GM12878 (cell line): ENCODE measurements at regions of chr6 and their contacts with region 1.

Region 1: GRCh38 chr6:28399350-28400121 is at the start of gene ZSCAN12:
- DNase-seq: peak; percentile 61
- ATAC-seq: peak; percentile 86
- H3K4me3 ChIP-seq: peak within 1 kb of the TSS; percentile 80
- H3K27ac ChIP-seq: peak within 1 kb of the TSS; percentile 97
- H3K4me1 ChIP-seq: peaks cover 4% of the 10 kb centered on the region
- H3K27me3 ChIP-seq: no peaks in the 10 kb centered on the region
- CTCF ChIP-seq: peak; percentile 50 to 59 (median 54)
- EP300 ChIP-seq: peak in 1 of 2 experiments; percentile 39; a peak in 1 of 4 replicates
- POLR2A ChIP-seq: peak; percentile 87
- RAD21 ChIP-seq: peak; percentile 25; the same call in 1 of the 2 replicates
- polyA plus RNA-seq, gene ZSCAN12: 1.2 to 1.6 TPM

Region 2: GRCh38 chr6:28383235-28384142 is 16.0 kb before region 1 on chr6:
- CTCF ChIA-PET with region 1: interaction called, 59 read pairs
- POLR2A ChIA-PET with region 1: interaction called, 7 read pairs
- RAD21 ChIA-PET with region 1: interaction called, 5 read pairs
- SMC1A ChIA-PET with region 1: interaction called, 30 read pairs
- in situ Hi-C with region 1: no loop called
- intact Hi-C with region 1: loop called (anchors 2 kb)
- DNase-seq: no peak
- ATAC-seq: peak; percentile 97
- H3K4me3 ChIP-seq: peak overlapping the region; percentile 38; the same call in 1 of the 2 replicates
- H3K27ac ChIP-seq: peak overlapping the region; percentile 50; the same call in 1 of the 2 replicates
- H3K4me1 ChIP-seq: no peaks in the 10 kb centered on the region
- H3K27me3 ChIP-seq: no peaks in the 10 kb centered on the region
- CTCF ChIP-seq: peak; percentile 41 to 47 (median 42); a peak in 5 of 6 replicates
- EP300 ChIP-seq: peak; percentile 72 to 74; a peak in 2 of 4 replicates
- POLR2A ChIP-seq: peak; percentile 66
- RAD21 ChIP-seq: peak; percentile 49

Region 3: GRCh38 chr6:28443112-28443773 is 43.7 kb after region 1 on chr6 and contains the start of gene ZSCAN23:
- CTCF ChIA-PET with region 1: no interaction called
- POLR2A ChIA-PET with region 1: no interaction called
- RAD21 ChIA-PET with region 1: no interaction called
- SMC1A ChIA-PET with region 1: no interaction called
- in situ Hi-C with region 1: no loop called
- intact Hi-C with region 1: loop called (anchors 1 kb)
- DNase-seq: peak; percentile 34
- ATAC-seq: peak; percentile 98
- H3K4me3 ChIP-seq: peak within 1 kb of the TSS; percentile 78
- H3K27ac ChIP-seq: no peak within 1 kb of the TSS; the same call in 1 of the 2 replicates
- H3K4me1 ChIP-seq: no peaks in the 10 kb centered on the region
- H3K27me3 ChIP-seq: peaks cover 0 to 2% of the 10 kb centered on the region in 2 experiments; a peak in 1 of 4 replicates
- CTCF ChIP-seq: no peak
- EP300 ChIP-seq: no peak
- POLR2A ChIP-seq: peak; percentile 80
- RAD21 ChIP-seq: no peak
- polyA plus RNA-seq, gene ZSCAN23: 0.04 to 0.34 TPM

Region 4: GRCh38 chr6:28489366-28490204 is 90.0 kb after region 1 on chr6:
- CTCF ChIA-PET with region 1: no interaction called
- POLR2A ChIA-PET with region 1: no interaction called
- RAD21 ChIA-PET with region 1: no interaction called
- SMC1A ChIA-PET with region 1: no interaction called
- in situ Hi-C with region 1: no loop called
- intact Hi-C with region 1: loop called (anchors 5 kb)
- DNase-seq: peak; percentile 36
- ATAC-seq: peak; percentile 87
- H3K4me3 ChIP-seq: peak overlapping the region; percentile 67
- H3K27ac ChIP-seq: no peak overlapping the region
- H3K4me1 ChIP-seq: no peaks in the 10 kb centered on the region
- H3K27me3 ChIP-seq: no peaks in the 10 kb centered on the region
- CTCF ChIP-seq: no peak
- EP300 ChIP-seq: no peak
- POLR2A ChIP-seq: peak; percentile 32; the same call in 1 of the 2 replicates
- RAD21 ChIP-seq: no peak

Region 5: GRCh38 chr6:28542440-28543296 is 143.1 kb after region 1 on chr6:
- CTCF ChIA-PET with region 1: interaction called, 6 read pairs
- POLR2A ChIA-PET with region 1: no interaction called
- RAD21 ChIA-PET with region 1: no interaction called
- SMC1A ChIA-PET with region 1: interaction called, 3 read pairs
- in situ Hi-C with region 1: no loop called
- intact Hi-C with region 1: loop called (anchors 2 kb)
- DNase-seq: peak; percentile 64
- ATAC-seq: peak; percentile 90
- H3K4me3 ChIP-seq: peak overlapping the region; percentile 60; the same call in 1 of the 2 replicates
- H3K27ac ChIP-seq: no peak overlapping the region
- H3K4me1 ChIP-seq: peaks cover 2% of the 10 kb centered on the region; the same call in 1 of the 2 replicates
- H3K27me3 ChIP-seq: no peaks in the 10 kb centered on the region
- CTCF ChIP-seq: peak; percentile 51 to 75 (median 72); a peak in 5 of 6 replicates
- EP300 ChIP-seq: no peak
- POLR2A ChIP-seq: no peak
- RAD21 ChIP-seq: peak; percentile 45

Region 6: DNA sequence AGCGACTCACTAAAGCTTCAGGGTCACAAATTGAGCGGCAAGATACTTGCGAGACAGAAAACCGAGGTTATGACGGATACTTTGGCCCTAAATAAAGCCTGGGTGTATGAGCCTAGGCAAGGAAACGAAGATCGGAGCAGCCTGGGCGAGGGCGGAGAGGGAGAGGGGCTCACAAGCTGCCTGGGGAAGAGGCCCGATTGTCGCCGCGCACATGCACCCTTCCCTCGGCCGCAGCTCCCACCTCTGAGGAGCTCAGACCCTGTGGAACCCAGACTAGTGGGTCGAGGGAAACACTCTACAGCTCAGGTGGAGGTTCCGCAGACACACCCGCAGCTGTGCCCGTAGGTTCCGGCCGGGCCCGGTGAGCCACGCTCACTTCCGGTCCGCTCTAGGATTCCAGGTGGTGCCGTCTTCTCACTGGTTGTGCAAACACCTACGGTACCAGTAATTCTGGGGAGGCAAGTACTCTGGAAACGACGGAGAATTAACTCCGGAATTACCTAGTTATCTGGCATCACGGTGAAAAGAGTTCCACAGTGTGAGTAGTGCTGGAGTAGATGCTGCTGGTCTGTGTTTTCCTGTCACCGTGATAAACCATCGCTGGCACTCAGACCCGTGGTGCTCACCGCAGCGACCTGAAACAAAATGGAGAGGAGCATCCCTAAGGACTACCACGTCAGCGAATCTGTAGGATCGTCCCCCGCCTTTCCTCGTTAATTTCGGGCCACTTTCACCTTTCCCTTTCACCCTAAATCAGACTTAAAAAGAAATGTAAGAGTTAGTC is 187.6 kb after region 1 on chr6:
- CTCF ChIA-PET with region 1: no interaction called
- POLR2A ChIA-PET with region 1: no interaction called
- RAD21 ChIA-PET with region 1: no interaction called
- SMC1A ChIA-PET with region 1: no interaction called
- in situ Hi-C with region 1: no loop called
- intact Hi-C with region 1: loop called (anchors 5 kb)
- DNase-seq: no peak
- ATAC-seq: peak; percentile 90
- H3K4me3 ChIP-seq: peak overlapping the region; percentile 73
- H3K27ac ChIP-seq: peak overlapping the region; percentile 1; the same call in 1 of the 2 replicates
- H3K4me1 ChIP-seq: no peaks in the 10 kb centered on the region
- H3K27me3 ChIP-seq: no peaks in the 10 kb centered on the region
- CTCF ChIP-seq: no peak
- EP300 ChIP-seq: no peak
- POLR2A ChIP-seq: peak; percentile 86
- RAD21 ChIP-seq: no peak

Region 7: GRCh38 chr6:28969129-28969528 is 569.6 kb after region 1 on chr6:
- CTCF ChIA-PET with region 1: no interaction called
- POLR2A ChIA-PET with region 1: no interaction called
- RAD21 ChIA-PET with region 1: no interaction called
- SMC1A ChIA-PET with region 1: no interaction called
- in situ Hi-C with region 1: no loop called
- intact Hi-C with region 1: no loop called
- DNase-seq: no peak
- ATAC-seq: no peak
- H3K4me3 ChIP-seq: no peak overlapping the region
- H3K27ac ChIP-seq: no peak overlapping the region
- H3K4me1 ChIP-seq: no peaks in the 10 kb centered on the region
- H3K27me3 ChIP-seq: no peaks in the 10 kb centered on the region
- CTCF ChIP-seq: no peak
- EP300 ChIP-seq: no peak
- POLR2A ChIP-seq: no peak
- RAD21 ChIP-seq: no peak